GM10248 (cell line): ENCODE measurements at regions of chr12 and their contacts with region 1.

Region 1: GRCh38 chr12:68510397-68510796 is 100.3 kb upstream of the RAP1B start:
- DNase-seq: no peak
- CTCF ChIP-seq: no peak

Region 2: DNA sequence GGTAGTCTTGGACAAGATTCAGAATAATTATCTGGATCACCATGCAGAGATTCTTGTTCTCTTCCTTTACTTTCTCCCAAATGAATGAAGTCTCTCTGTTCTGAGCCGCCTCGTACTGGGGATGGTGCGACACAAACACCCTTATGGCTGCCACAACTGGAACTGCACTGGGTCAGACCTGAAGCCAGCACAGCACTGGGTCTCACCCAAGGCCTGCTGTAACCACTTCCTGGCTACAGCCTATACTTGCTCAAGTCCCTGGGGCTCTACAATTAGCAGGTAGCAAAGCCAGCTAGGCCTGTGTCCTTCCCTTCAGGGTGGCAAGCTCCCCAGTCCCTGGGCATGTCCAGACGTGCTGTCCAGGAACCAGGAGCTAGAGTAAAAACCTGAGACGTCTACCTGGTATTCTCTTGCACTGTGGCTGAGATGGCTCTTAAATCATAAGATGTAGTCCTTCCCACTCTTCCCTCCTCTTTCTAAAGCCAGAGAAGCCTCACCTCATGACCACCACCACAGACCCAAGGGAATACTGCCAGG is 378.5 kb before region 1 on chr12:
- CTCF ChIA-PET with region 1: no interaction called
- POLR2A ChIA-PET with region 1: no interaction called
- DNase-seq: no peak
- CTCF ChIP-seq: no peak

Region 3: GRCh38 chr12:68440068-68440581 is 70.3 kb before region 1 on chr12:
- CTCF ChIA-PET with region 1: no interaction called
- POLR2A ChIA-PET with region 1: no interaction called
- DNase-seq: no peak
- CTCF ChIP-seq: no peak

Region 4: GRCh38 chr12:68497702-68498101 is 12.7 kb before region 1 on chr12:
- CTCF ChIA-PET with region 1: interaction called, 15 read pairs
- POLR2A ChIA-PET with region 1: no interaction called
- DNase-seq: no peak
- CTCF ChIP-seq: no peak

Region 5: DNA sequence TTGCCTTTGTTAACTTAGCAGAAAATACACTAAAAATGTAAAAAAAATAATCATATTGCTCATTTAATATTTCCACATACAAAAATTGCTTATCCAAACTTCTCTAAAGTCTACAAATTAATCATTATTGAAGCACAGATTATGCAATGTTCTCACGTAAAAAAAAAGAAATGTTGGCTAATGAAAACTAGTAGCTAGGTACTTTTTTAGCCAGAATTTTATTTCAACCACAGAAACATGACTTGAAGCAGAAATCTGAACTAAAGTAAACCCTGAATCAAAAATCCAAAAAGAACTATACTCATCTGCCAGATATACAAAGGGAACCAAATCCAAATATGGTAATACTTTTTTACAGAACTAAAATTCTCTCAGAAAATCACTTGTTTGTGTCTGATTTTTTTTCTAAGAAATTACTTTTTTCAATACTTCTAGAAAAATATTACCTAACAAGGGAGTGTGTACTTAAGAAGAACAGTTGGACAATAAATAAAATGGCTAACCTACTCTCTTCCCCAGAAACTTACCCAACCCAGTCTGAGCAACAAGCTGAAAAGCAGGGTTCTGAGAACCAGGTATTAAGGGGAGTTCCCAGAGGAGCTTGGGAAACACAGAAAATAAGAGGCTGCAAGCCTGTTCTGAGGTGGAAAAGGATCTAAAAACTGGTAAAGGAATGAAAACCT is 21.9 kb after region 1 on chr12:
- CTCF ChIA-PET with region 1: no interaction called
- POLR2A ChIA-PET with region 1: no interaction called
- DNase-seq: no peak
- CTCF ChIP-seq: no peak